Activated CD4-positive, alpha-beta T cell treated with anti-CD3 and anti-CD28 coated beads, Interleukin-2, amount 10 ng/mL, durations not matched to agents 24 days and 14 days (primary cell): ENCODE measurements at regions of chr3 and their contacts with region 1.

Region 1: DNA sequence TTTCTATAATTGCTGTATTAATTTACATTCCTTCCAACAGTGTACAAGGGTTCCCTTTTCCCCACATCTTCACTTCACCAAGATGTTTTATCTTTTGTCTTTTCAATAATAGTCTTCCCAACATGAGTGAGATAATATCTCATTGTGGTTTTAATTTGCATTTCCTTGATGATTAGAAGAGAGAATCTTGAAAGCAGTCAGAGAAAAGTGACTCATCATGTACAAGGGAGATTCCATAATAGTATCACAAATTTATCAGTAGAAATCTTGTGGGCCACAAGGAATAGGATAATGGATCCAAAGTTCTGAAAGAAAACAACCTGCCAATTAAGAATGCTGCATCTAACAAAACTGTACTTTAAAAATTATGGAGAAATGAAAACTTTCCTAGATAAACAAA is 189.3 kb downstream of the NECTIN3 start:
- DNase-seq: no peak
- H3K4me3 Mint-ChIP-seq: no peak overlapping the region
- H3K27ac Mint-ChIP-seq: peak overlapping the region; percentile 31
- H3K4me1 Mint-ChIP-seq: peaks cover 19% of the 10 kb centered on the region
- H3K27me3 Mint-ChIP-seq: peaks cover 23% of the 10 kb centered on the region

Region 2: GRCh38 chr3:109806929-109807328 is 1453.9 kb before region 1 on chr3:
- intact Hi-C with region 1: loop called (anchors 10 kb)
- DNase-seq: peak; percentile 84
- H3K4me3 Mint-ChIP-seq: peak overlapping the region; percentile 54
- H3K27ac Mint-ChIP-seq: peak overlapping the region; percentile 57
- H3K4me1 Mint-ChIP-seq: peaks cover 31% of the 10 kb centered on the region
- H3K27me3 Mint-ChIP-seq: peaks cover 7% of the 10 kb centered on the region

Region 3: GRCh38 chr3:111194048-111194447 is 66.8 kb before region 1 on chr3:
- intact Hi-C with region 1: no loop called
- DNase-seq: no peak
- H3K4me3 Mint-ChIP-seq: no peak overlapping the region
- H3K27ac Mint-ChIP-seq: no peak overlapping the region
- H3K4me1 Mint-ChIP-seq: peaks cover 15% of the 10 kb centered on the region
- H3K27me3 Mint-ChIP-seq: no peaks in the 10 kb centered on the region

Region 4: DNA sequence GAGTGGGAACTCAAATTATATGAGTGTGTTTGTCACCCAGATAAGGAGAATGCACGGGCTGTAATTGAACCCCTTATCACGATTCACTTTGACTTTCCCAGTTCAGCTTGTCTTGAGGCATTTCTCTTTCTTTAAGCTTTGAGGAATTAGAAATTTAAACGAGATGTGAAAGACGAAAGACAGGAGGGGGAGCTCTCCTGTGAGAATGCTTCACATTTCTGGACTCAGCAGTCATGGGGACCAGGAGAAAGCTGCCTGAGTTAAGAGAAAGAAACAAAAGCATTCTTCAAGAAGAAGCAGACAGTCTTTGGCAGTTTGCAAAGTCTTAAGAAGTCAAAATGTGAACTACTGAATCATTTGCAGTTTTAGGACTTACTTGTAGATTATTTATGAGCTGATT is 16.3 kb after region 1 on chr3:
- intact Hi-C with region 1: loop called (anchors 2 kb)
- DNase-seq: peak; percentile 56
- H3K4me3 Mint-ChIP-seq: no peak overlapping the region
- H3K27ac Mint-ChIP-seq: no peak overlapping the region
- H3K4me1 Mint-ChIP-seq: peaks cover 33% of the 10 kb centered on the region
- H3K27me3 Mint-ChIP-seq: peaks cover 9% of the 10 kb centered on the region

Region 5: GRCh38 chr3:111326144-111326995 is 65.5 kb after region 1 on chr3:
- intact Hi-C with region 1: loop called (anchors 2 kb)
- DNase-seq: no peak
- H3K4me3 Mint-ChIP-seq: peak overlapping the region; percentile 3
- H3K27ac Mint-ChIP-seq: peak overlapping the region; percentile 67
- H3K4me1 Mint-ChIP-seq: peaks cover 29% of the 10 kb centered on the region
- H3K27me3 Mint-ChIP-seq: no peaks in the 10 kb centered on the region

Region 6: DNA sequence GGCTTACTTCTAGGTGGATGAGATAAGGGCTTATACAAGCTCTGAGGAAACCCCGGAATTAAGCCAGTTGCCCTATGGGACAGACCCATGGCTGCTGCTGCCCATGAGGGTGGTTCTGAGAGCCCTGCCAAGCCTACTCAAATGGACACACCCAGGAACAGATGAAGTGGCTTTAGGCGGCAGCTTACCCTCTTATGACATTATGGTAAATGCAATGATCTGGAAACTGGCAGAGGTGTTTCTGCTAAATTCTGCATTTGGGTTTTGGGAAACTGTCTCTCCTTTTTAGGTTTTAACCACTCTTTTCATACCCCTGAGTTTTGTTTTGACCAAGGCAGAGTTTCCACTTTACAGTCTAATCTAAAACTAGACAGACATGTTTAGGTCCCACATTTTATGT is 343.2 kb after region 1 on chr3:
- intact Hi-C with region 1: loop called (anchors 5 kb)
- DNase-seq: peak; percentile 66
- H3K4me3 Mint-ChIP-seq: peak overlapping the region; percentile 40
- H3K27ac Mint-ChIP-seq: peak overlapping the region; percentile 91
- H3K4me1 Mint-ChIP-seq: peaks cover 74% of the 10 kb centered on the region
- H3K27me3 Mint-ChIP-seq: no peaks in the 10 kb centered on the region